Psoas muscle (tissue), 8 donors: ENCODE measurements at regions of chr6 and their contacts with region 1.

Region 1: GRCh38 chr6:89689732-89690131 is 51.2 kb upstream of the LYRM2 start:
- DNase-seq: no peak
- ATAC-seq: peak in 3 of 4 donors; percentile 28 to 47 (median 35)
- H3K4me3 ChIP-seq: no peak overlapping the region
- H3K27ac ChIP-seq: no peak overlapping the region
- H3K4me1 ChIP-seq: peaks cover 4% of the 10 kb centered on the region
- H3K27me3 ChIP-seq: no peaks in the 10 kb centered on the region
- CTCF ChIP-seq: no peak

Region 2: GRCh38 chr6:88725111-88725975 is 964.4 kb before region 1 on chr6:
- intact Hi-C with region 1: no loop called
- DNase-seq: peak; percentile 12 to 53
- ATAC-seq: no peak
- H3K4me3 ChIP-seq: no peak overlapping the region
- H3K27ac ChIP-seq: no peak overlapping the region
- H3K4me1 ChIP-seq: no peaks in the 10 kb centered on the region
- H3K27me3 ChIP-seq: no peaks in the 10 kb centered on the region
- CTCF ChIP-seq: no peak

Region 3: DNA sequence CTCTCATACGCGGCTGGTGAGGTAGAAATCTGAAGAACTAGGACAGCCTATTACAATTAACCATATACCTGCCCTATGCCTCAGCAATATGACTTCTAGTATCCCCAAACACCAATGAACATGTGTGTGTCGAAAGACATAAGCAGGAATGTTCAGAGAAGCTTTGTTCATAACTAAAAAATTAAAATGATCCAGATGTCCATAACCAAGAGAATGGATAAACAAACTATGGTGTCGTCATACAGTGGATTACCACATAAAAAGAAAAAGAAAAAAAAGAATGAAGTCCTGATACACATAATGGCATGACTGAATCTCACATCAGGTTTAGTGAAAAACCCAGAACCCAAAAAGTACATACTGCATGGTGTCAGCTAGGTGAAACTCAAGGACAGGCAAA is 56.0 kb after region 1 on chr6:
- intact Hi-C with region 1: loop called in 1 of 2 experiments (anchors 2 kb)
- DNase-seq: no peak
- ATAC-seq: no peak
- H3K4me3 ChIP-seq: no peak overlapping the region
- H3K27ac ChIP-seq: no peak overlapping the region
- H3K4me1 ChIP-seq: no peaks in the 10 kb centered on the region
- H3K27me3 ChIP-seq: no peaks in the 10 kb centered on the region
- CTCF ChIP-seq: no peak

Region 4: DNA sequence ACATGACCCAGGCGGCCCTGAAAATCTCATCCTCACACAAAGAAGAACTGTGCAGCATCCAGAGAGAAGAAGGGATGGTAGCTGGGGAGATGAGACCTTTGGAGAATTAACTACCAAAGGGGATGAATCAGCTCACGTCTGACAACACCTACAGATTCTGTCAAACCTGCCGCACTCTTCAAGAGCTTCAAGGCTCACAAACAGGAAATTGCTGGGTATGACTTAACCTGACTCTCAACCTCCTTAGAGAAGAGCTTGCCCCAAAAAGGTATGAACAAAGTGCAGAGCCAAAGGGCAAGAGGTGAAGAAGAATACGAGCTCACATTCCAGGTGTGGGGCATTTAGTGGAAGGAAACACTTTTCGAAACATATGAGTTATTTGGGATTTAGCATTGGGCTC is 467.1 kb after region 1 on chr6:
- intact Hi-C with region 1: no loop called
- DNase-seq: no peak
- ATAC-seq: no peak
- H3K4me3 ChIP-seq: no peak overlapping the region
- H3K27ac ChIP-seq: no peak overlapping the region
- H3K4me1 ChIP-seq: peaks cover 17% of the 10 kb centered on the region
- H3K27me3 ChIP-seq: no peaks in the 10 kb centered on the region
- CTCF ChIP-seq: no peak